Gastrocnemius medialis (tissue), 4 donors: ENCODE measurements at regions of chr4 and their contacts with region 1.

Region 1: DNA sequence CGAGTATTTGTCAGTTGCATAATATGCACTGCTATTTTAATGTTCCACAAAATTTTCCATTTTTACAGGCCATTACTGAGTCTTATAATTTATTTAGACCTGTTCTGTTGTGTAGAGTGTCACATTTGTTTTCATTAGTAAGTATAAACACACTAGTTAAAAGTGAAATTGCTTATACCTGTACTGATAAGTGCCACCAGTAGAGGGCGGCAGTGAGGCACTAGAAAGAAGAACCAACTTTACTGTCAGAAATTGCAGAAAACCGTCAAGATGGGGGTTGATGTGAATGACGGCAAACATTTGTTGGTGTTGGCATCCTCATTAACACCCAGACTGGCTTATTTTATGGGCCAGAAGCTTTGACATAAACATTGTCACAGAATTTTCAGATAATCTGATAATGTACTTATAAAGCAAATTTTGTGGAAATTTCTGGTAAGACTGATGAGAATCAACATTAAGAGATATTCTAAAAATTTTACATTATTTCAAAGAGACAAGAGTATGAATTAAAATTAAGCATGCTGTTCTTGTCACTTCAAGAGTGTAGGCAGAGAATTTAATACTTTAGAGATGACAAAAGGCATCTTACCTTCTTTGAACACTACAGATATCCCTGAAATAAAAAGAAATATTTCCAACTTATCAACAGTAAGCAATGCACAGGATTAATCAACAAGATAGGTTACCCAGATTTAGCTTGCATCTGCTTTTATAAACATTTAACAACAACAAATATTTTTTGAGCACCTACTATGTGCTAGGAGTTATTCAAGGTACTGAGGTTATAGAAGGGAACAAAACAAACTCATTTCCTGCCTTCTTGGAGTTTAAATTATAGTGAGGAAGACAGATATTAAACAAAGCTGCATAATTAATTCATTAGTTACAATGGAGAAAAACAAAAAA is 24.9 kb downstream of the ALPK1 start:
- DNase-seq: peak in 1 of 2 donors; percentile 11
- ATAC-seq: peak in 1 of 2 donors; percentile 42
- H3K4me3 ChIP-seq: no peak overlapping the region
- H3K27ac ChIP-seq: no peak overlapping the region
- H3K4me1 ChIP-seq: no peaks in the 10 kb centered on the region
- H3K27me3 ChIP-seq: no peaks in the 10 kb centered on the region
- CTCF ChIP-seq: peak; percentile 60 to 85 (median 66)
- POLR2A ChIP-seq: no peak

Region 2: GRCh38 chr4:112099701-112100297 is 222.2 kb before region 1 on chr4:
- in situ Hi-C with region 1: no loop called
- intact Hi-C with region 1: loop called (anchors 5 kb)
- DNase-seq: no peak
- ATAC-seq: peak; percentile 80
- H3K4me3 ChIP-seq: no peak overlapping the region
- H3K27ac ChIP-seq: no peak overlapping the region
- H3K4me1 ChIP-seq: no peaks in the 10 kb centered on the region
- H3K27me3 ChIP-seq: no peaks in the 10 kb centered on the region
- CTCF ChIP-seq: peak; percentile 38 to 69 (median 55)
- POLR2A ChIP-seq: no peak

Region 3: DNA sequence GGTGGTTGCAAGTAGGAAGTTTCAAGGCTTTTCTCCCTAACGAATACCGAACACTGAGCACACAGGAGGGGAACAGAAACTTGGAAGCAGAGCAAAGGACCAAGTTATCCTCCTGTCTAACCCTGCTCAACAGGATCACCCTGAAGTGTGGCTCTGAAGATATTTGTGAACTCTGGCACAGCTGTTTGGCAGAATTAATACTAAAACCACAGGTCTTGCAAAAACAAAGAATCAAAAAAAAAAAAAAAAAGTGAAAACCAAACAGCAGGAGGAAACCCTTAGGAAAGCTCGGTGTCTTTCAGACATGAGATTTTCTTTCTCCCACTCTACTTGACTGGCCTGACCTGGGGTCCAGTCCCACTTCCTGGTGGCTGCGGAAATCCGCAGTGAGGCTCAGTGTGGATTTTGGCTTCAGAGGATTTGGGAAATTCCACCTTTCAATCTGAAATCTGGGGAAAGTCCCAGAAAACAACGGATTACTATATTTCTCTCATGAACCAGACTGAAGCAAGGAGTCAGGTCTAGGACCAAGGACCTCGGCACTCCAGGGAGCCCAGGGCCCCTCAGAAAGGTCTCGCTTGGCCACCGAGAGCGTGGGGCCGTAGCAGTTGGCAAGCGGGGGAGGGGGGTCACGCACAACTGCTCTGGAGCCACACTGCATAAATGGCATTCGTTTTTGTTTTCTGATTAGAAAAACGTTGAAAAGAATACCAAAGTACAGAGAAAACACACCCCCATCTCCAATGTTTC is 37.2 kb before region 1 on chr4:
- in situ Hi-C with region 1: no loop called
- intact Hi-C with region 1: loop called (anchors 5 kb)
- DNase-seq: no peak
- ATAC-seq: peak; percentile 39 to 52
- H3K4me3 ChIP-seq: peak overlapping the region; percentile 56 to 89 (median 77)
- H3K27ac ChIP-seq: peak overlapping the region; percentile 63 to 79 (median 74)
- H3K4me1 ChIP-seq: peaks cover 17 to 21% of the 10 kb centered on the region in 2 donors
- H3K27me3 ChIP-seq: no peaks in the 10 kb centered on the region
- CTCF ChIP-seq: no peak
- POLR2A ChIP-seq: no peak

Region 4: GRCh38 chr4:112485888-112486287 is 163.9 kb after region 1 on chr4:
- in situ Hi-C with region 1: no loop called
- intact Hi-C with region 1: no loop called
- DNase-seq: no peak
- ATAC-seq: no peak
- H3K4me3 ChIP-seq: no peak overlapping the region
- H3K27ac ChIP-seq: no peak overlapping the region
- H3K4me1 ChIP-seq: no peaks in the 10 kb centered on the region
- H3K27me3 ChIP-seq: peaks cover 0 to 4% (median 0%) of the 10 kb centered on the region in 3 donors
- CTCF ChIP-seq: no peak
- POLR2A ChIP-seq: no peak

Region 5: GRCh38 chr4:113404841-113405240 is 1082.8 kb after region 1 on chr4:
- in situ Hi-C with region 1: no loop called
- intact Hi-C with region 1: no loop called
- DNase-seq: no peak
- ATAC-seq: no peak
- H3K4me3 ChIP-seq: no peak overlapping the region
- H3K27ac ChIP-seq: no peak overlapping the region
- H3K4me1 ChIP-seq: peaks cover 0 to 13% of the 10 kb centered on the region in 2 donors
- H3K27me3 ChIP-seq: no peaks in the 10 kb centered on the region
- CTCF ChIP-seq: no peak
- POLR2A ChIP-seq: no peak